ENCODE measurements at regions of chr14 and their contacts with region 1.

Region 1: DNA sequence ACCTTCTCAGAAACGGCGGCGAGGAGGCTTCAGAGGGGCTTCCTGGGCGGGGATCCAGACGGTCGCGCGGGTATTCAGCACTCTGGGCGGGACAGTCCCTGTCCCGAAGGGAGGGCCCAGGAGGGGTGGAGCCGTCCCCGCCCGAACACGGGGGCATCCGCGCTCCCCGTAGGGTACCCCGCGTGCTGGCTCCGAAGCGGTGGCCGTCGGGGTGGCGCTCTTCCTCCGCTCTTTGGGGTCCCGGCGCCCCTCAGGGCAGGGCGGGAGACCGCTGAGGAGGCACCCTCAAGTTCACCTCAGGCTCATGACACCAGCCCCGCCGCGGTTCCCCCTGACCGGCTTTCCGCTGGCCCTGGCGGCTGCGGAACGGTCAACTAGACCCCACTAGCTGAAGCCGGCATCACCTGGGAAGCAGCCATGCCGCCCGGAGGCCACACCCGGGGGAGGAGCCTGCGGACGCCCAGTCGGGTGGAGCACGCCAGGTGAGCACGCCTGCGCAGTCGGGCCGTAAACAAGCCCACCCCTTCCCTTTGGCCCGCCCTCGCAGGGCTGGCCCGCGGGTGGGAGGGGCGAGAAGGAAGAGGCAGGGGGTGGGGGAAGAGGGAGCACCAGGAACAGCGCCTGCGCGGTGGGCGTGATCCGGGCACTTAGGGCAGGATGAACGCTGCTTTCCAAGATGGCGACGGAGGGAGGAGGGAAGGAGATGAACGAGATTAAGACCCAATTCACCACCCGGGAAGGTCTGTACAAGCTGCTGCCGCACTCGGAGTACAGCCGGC is at the start of gene WDR20:
- DNase-seq: peak; percentile 99
- H3K4me3 Mint-ChIP-seq: peak within 1 kb of the TSS; percentile 94
- H3K27ac Mint-ChIP-seq: peak within 1 kb of the TSS; percentile 91
- H3K4me1 Mint-ChIP-seq: peaks cover 19% of the 10 kb centered on the region
- H3K27me3 Mint-ChIP-seq: no peaks in the 10 kb centered on the region
- total RNA-seq, gene WDR20: 33.9 and 34.2 TPM in 2 replicates

Region 2: GRCh38 chr14:101964297-101965144 is 174.9 kb before region 1 on chr14 and contains the start of gene DYNC1H1:
- intact Hi-C with region 1: loop called (anchors 1 kb)
- DNase-seq: peak; percentile 89
- H3K4me3 Mint-ChIP-seq: peak within 1 kb of the TSS; percentile 90
- H3K27ac Mint-ChIP-seq: peak within 1 kb of the TSS; percentile 93
- H3K4me1 Mint-ChIP-seq: peaks cover 38% of the 10 kb centered on the region
- H3K27me3 Mint-ChIP-seq: peaks cover 2% of the 10 kb centered on the region
- total RNA-seq, gene DYNC1H1: 241 and 254 TPM in 2 replicates

Region 3: GRCh38 chr14:102063091-102063802 is 76.2 kb before region 1 on chr14:
- intact Hi-C with region 1: loop called (anchors 1 kb)
- DNase-seq: peak; percentile 48
- H3K4me3 Mint-ChIP-seq: no peak overlapping the region
- H3K27ac Mint-ChIP-seq: no peak overlapping the region
- H3K4me1 Mint-ChIP-seq: no peaks in the 10 kb centered on the region
- H3K27me3 Mint-ChIP-seq: peaks cover 3% of the 10 kb centered on the region

Region 4: GRCh38 chr14:102182190-102182589 is 42.8 kb after region 1 on chr14:
- intact Hi-C with region 1: loop called (anchors 1 kb)
- DNase-seq: no peak
- H3K4me3 Mint-ChIP-seq: no peak overlapping the region
- H3K27ac Mint-ChIP-seq: peak overlapping the region; percentile 68
- H3K4me1 Mint-ChIP-seq: peaks cover 50% of the 10 kb centered on the region
- H3K27me3 Mint-ChIP-seq: no peaks in the 10 kb centered on the region

Region 5: DNA sequence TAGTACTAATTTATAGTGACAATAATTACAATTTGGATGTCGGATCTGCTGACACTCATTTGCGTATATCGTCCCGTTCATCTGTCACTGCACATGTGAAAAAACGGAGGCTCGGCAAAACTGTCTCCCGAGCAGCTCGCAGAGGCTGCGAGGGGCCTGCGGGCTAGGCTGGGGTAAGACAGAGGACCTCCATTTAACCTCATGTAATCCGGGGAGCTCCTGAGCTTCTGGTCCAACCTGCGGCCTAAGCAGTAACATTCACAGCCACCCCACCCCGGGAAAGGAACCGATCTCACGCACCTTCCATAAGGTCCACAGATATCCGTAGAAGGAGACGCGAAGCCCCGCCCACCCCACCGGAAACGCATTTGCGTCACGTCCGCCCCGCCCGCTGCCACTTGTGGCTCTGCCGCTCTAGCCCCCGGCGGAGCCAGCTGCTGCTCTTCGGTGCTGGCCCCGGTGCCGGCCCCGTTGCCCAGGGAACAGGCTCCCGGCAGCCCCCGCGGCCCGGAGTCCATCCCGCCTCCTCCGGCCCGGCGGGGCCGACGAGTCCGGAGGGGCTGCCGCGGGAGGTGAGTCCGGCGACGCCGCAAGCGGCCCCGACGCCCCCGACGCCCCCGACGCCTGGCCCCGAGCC is 223.2 kb after region 1 on chr14 and contains the starts of genes CINP and TECPR2:
- intact Hi-C with region 1: loop called (anchors 1 kb)
- DNase-seq: peak; percentile 92
- H3K4me3 Mint-ChIP-seq: peak within 1 kb of the TSS; percentile 93
- H3K27ac Mint-ChIP-seq: peak within 1 kb of the TSS; percentile 91
- H3K4me1 Mint-ChIP-seq: peaks cover 32% of the 10 kb centered on the region
- H3K27me3 Mint-ChIP-seq: no peaks in the 10 kb centered on the region
- total RNA-seq, gene CINP: 39.6 and 42.5 TPM in 2 replicates
- total RNA-seq, gene TECPR2: 9.5 and 10.1 TPM in 2 replicates

Measured in activated T-helper 1 cell treated with anti-CD3 and anti-CD28 coated beads, Interleukin-12 subunit alpha, Interleukin-12 subunit beta, Interleukin-2, Interleukin-4 antibody, amounts not matched to agents 30 ng/mL and 10 ng/mL and 1 ng/mL, durations not matched to agents 14 hours and 24 hours and 36 hours (primary cell).